Activated CD4-positive, alpha-beta memory T cell treated with anti-CD3 and anti-CD28 coated beads for 36 hours (primary cell): ENCODE measurements at regions of chr11 and their contacts with region 1.

Region 1: DNA sequence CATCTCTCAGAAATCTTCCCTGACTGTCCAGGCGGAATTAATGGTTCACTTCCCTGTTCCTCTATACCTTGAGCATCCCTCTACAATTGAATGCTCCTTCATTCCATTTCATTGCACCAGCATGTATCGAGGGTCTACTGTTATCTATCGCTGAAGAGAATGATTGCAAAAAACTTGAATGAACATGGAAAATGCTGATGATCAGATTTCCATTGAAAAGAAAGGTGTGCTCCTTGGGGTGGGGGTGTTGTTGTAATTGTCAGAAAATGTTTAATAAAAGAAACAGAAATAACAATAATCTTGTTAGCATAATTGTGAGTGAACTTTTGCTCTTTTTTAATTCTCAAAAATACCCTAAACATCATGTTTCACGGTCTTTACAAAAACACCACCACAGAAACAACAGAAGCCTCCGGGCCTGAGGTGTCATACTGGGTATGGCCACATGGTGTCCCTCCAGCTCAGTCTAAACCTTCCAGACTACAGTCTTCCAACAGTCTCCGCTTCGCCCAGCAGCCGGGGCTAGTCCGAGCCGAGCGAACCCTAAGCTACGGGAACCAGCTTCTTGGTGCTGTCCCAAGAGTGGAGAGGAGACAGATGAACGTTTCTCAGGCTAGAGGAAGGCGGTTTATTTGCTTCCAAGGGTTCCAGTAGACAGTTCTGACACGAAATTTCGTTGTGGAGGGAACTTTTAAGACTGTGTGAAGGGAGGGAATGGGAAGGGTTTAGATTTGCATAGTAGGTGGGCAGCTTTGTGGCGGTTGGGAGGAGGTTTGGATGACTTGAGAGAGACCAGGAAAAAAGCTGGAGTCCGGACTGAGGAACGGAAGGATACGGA is 75.8 kb upstream of the ZBED5 start:
- DNase-seq: peak; percentile 89
- H3K4me3 Mint-ChIP-seq: peak overlapping the region; percentile 68
- H3K27ac Mint-ChIP-seq: no peak overlapping the region
- H3K4me1 Mint-ChIP-seq: peaks cover 15% of the 10 kb centered on the region
- H3K27me3 Mint-ChIP-seq: peaks cover 22% of the 10 kb centered on the region

Region 2: GRCh38 chr11:10857709-10858438 is 75.8 kb before region 1 on chr11 and contains the start of gene ZBED5:
- CTCF ChIA-PET with region 1: no interaction called
- POLR2A ChIA-PET with region 1: interaction called, 4 read pairs
- intact Hi-C with region 1: loop called (anchors 2 kb)
- DNase-seq: peak; percentile 98
- H3K4me3 Mint-ChIP-seq: peak within 1 kb of the TSS; percentile 97
- H3K27ac Mint-ChIP-seq: peak within 1 kb of the TSS; percentile 99
- H3K4me1 Mint-ChIP-seq: peaks cover 33% of the 10 kb centered on the region
- H3K27me3 Mint-ChIP-seq: no peaks in the 10 kb centered on the region
- total RNA-seq, gene ZBED5: 39.8 to 43.3 TPM

Region 3: GRCh38 chr11:10943968-10944367 is 10.3 kb after region 1 on chr11:
- CTCF ChIA-PET with region 1: interaction called, 27 read pairs
- POLR2A ChIA-PET with region 1: no interaction called
- intact Hi-C with region 1: no loop called
- DNase-seq: no peak
- H3K4me3 Mint-ChIP-seq: no peak overlapping the region
- H3K27ac Mint-ChIP-seq: no peak overlapping the region
- H3K4me1 Mint-ChIP-seq: no peaks in the 10 kb centered on the region
- H3K27me3 Mint-ChIP-seq: peaks cover 5% of the 10 kb centered on the region

Region 4: DNA sequence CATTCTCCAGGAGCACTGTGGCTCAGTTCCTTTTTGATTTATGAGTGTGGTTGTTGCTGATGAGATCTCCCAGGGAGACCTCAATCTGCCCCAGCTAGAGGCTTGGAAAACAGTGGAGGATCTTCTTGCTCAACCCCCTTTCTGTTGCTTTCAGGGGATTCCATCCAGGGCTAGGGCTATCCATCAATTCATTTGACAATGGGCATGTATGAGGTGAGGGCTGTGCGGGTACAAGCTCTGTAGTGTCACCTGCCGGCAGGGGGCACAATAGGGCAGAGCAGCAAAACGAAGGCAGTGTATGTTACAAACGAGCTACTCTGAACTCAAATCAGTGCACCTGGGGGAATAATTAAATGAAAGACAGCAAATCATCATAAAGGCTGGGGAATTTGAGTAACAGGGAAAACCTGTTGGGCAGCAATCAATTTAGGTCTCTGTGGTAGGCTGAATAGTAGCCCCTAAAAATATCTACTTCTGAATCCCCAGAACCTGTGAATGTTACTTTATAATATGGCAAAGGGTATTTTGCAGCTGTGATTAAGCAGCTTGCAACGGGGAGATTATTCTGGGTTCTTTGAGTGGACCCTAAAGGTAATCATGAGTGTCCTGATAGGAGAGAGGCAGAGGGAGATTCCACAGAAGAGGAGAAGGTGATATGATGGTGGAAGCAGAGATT is 94.5 kb after region 1 on chr11:
- CTCF ChIA-PET with region 1: interaction called, 43 read pairs
- POLR2A ChIA-PET with region 1: no interaction called
- intact Hi-C with region 1: no loop called
- DNase-seq: peak; percentile 83
- H3K4me3 Mint-ChIP-seq: no peak overlapping the region
- H3K27ac Mint-ChIP-seq: no peak overlapping the region
- H3K4me1 Mint-ChIP-seq: no peaks in the 10 kb centered on the region
- H3K27me3 Mint-ChIP-seq: no peaks in the 10 kb centered on the region

Region 5: DNA sequence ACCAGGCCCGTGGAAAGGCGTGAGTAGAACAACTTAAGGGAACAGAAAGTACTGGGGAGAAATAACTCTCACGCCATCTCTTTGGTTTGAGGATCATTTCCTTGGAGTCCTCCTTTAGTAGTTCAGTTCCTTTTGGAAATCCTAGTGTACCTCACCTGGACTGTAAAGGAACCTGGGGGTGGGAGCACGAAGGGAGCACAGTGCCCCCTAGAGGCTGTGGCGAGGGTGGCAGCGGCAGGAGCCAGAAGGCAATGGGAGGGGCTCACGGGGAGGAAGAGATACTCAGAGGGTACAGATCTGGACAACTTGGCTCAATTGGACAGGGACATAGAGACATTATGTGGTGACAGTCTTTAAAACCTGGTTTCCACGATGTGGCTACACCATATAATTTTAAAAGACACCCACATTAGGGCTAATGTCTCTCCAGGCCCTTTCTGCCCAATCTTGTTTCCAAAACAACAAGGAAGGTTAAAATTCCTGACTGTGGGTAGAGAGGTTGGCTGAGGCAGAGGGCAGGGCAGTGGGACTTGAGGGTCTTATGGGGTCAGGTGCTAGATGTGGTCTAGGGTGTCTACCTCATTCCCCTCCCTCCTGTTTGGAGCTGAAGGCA is 332.4 kb after region 1 on chr11:
- CTCF ChIA-PET with region 1: no interaction called
- POLR2A ChIA-PET with region 1: no interaction called
- intact Hi-C with region 1: loop called (anchors 2 kb)
- DNase-seq: peak; percentile 79
- H3K4me3 Mint-ChIP-seq: no peak overlapping the region
- H3K27ac Mint-ChIP-seq: no peak overlapping the region
- H3K4me1 Mint-ChIP-seq: no peaks in the 10 kb centered on the region
- H3K27me3 Mint-ChIP-seq: no peaks in the 10 kb centered on the region